CD8-positive, alpha-beta T cell (primary cell): ENCODE measurements at regions of chr17 and their contacts with region 1.

Region 1: GRCh38 chr17:67518876-67519275 is 141.8 kb downstream of the PITPNC1 start:
- DNase-seq: no peak
- ATAC-seq: no peak
- H3K4me3 ChIP-seq: no peak overlapping the region
- H3K4me3 Mint-ChIP-seq: no peak overlapping the region
- H3K27ac ChIP-seq: no peak overlapping the region
- H3K27ac Mint-ChIP-seq: peak overlapping the region; percentile 88
- H3K4me1 ChIP-seq: peaks cover 17% of the 10 kb centered on the region
- H3K4me1 Mint-ChIP-seq: peaks cover 76% of the 10 kb centered on the region
- H3K27me3 ChIP-seq: no peaks in the 10 kb centered on the region
- H3K27me3 Mint-ChIP-seq: no peaks in the 10 kb centered on the region
- CTCF ChIP-seq: no peak

Region 2: GRCh38 chr17:67503184-67503583 is 15.7 kb before region 1 on chr17:
- CTCF ChIA-PET with region 1: interaction called, 4 read pairs
- POLR2A ChIA-PET with region 1: no interaction called
- intact Hi-C with region 1: loop called in 1 of 2 experiments (anchors 2 kb)
- DNase-seq: no peak
- ATAC-seq: no peak
- H3K4me3 ChIP-seq: no peak overlapping the region
- H3K4me3 Mint-ChIP-seq: no peak overlapping the region
- H3K27ac ChIP-seq: no peak overlapping the region
- H3K27ac Mint-ChIP-seq: peak overlapping the region; percentile 67
- H3K4me1 ChIP-seq: peaks cover 31% of the 10 kb centered on the region
- H3K4me1 Mint-ChIP-seq: peaks cover 79% of the 10 kb centered on the region
- H3K27me3 ChIP-seq: no peaks in the 10 kb centered on the region
- H3K27me3 Mint-ChIP-seq: no peaks in the 10 kb centered on the region
- CTCF ChIP-seq: no peak